Naive thymus-derived CD4-positive, alpha-beta T cell (primary cell): ENCODE measurements at regions of chr4 and their contacts with region 1.

Region 1: GRCh38 chr4:122577808-122578781 is 42.8 kb downstream of the IL21 start:
- DNase-seq: peak; percentile 12 to 95 (median 91)
- ATAC-seq: peak; percentile 90
- H3K4me3 ChIP-seq: peak overlapping the region; percentile 12
- H3K4me3 Mint-ChIP-seq: peak overlapping the region; percentile 47 to 79 (median 72)
- H3K27ac ChIP-seq: peak overlapping the region; percentile 76
- H3K27ac Mint-ChIP-seq: peak overlapping the region; percentile 82 to 98 (median 91)
- H3K4me1 ChIP-seq: peaks cover 7 to 14% of the 10 kb centered on the region in 2 donors
- H3K4me1 Mint-ChIP-seq: peaks cover 16 to 54% (median 50%) of the 10 kb centered on the region in 7 donors
- H3K27me3 ChIP-seq: no peaks in the 10 kb centered on the region
- H3K27me3 Mint-ChIP-seq: peaks cover 0 to 6% (median 0%) of the 10 kb centered on the region in 5 donors

Region 2: DNA sequence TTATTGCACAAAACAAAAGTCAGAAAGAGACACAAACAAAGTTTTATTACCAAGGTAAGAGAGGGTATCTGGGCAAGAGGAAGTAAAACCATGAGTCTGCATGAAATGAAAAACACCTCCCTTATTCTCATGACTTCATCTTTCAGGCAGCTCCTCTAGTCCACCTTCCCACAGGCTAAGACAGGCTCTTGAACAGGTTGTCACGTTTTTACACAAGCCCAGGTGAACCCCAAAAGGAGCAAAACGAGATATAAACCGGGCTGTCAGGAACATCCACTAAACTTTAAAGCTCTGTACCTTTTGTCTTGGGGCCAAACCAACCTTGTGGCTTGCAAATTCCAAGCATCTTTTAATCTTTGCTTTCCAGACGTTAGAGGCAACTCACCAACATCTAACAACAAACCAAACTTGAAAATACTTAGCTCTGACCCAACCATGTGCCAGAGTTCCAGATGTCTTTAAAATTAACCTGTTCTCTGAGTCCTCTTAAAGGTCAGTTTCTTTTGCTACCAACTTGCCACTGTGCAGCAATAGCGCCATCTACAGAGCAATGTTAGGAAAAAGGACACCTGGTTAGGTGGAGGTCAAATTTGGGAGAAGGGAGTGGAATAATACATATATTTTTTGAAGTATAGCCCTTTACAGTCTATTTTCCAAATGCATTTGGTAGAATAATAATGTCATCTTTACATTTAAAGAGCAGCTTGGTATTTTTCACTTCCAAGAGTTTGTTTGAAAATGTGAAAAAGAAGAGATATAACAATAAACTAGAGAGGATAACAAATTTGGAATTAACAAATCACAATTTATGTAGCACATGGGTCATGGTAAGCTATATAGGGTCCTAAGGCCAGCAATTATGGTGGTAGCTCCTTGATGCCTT is 1270.4 kb before region 1 on chr4:
- CTCF ChIA-PET with region 1: no interaction called
- POLR2A ChIA-PET with region 1: no interaction called
- intact Hi-C with region 1: loop called in 1 of 2 experiments (anchors 5 kb)
- DNase-seq: peak in 7 of 9 donors; percentile 10 to 52 (median 33)
- ATAC-seq: peak; percentile 70
- H3K4me3 ChIP-seq: no peak overlapping the region
- H3K4me3 Mint-ChIP-seq: no peak overlapping the region
- H3K27ac ChIP-seq: no peak overlapping the region
- H3K27ac Mint-ChIP-seq: peak overlapping the region in 1 of 9 donors; percentile 39
- H3K4me1 ChIP-seq: peaks cover 0 to 9% of the 10 kb centered on the region in 2 donors
- H3K4me1 Mint-ChIP-seq: peaks cover 3 to 19% (median 15%) of the 10 kb centered on the region in 7 donors
- H3K27me3 ChIP-seq: no peaks in the 10 kb centered on the region
- H3K27me3 Mint-ChIP-seq: peaks cover 0 to 17% (median 0%) of the 10 kb centered on the region in 5 donors

Region 3: GRCh38 chr4:121869841-121870656 is 708.0 kb before region 1 on chr4 and contains the start of gene BBS7:
- CTCF ChIA-PET with region 1: no interaction called
- POLR2A ChIA-PET with region 1: no interaction called
- intact Hi-C with region 1: loop called in 1 of 2 experiments (anchors 1 kb)
- DNase-seq: peak; percentile 79 to 93 (median 89)
- ATAC-seq: peak; percentile 98
- H3K4me3 ChIP-seq: peak within 1 kb of the TSS; percentile 99
- H3K4me3 Mint-ChIP-seq: peak within 1 kb of the TSS; percentile 88 to 98 (median 97)
- H3K27ac ChIP-seq: peak within 1 kb of the TSS; percentile 77
- H3K27ac Mint-ChIP-seq: peak within 1 kb of the TSS; percentile 69 to 95 (median 90)
- H3K4me1 ChIP-seq: peaks cover 0 to 10% of the 10 kb centered on the region in 2 donors
- H3K4me1 Mint-ChIP-seq: peaks cover 9 to 17% (median 15%) of the 10 kb centered on the region in 7 donors
- H3K27me3 ChIP-seq: no peaks in the 10 kb centered on the region
- H3K27me3 Mint-ChIP-seq: peaks cover 0 to 30% (median 12%) of the 10 kb centered on the region in 5 donors
- total RNA-seq, gene BBS7: 3.7 to 13.1 (median 8.1) TPM

Region 4: GRCh38 chr4:122131562-122132157 is 446.4 kb before region 1 on chr4:
- CTCF ChIA-PET with region 1: no interaction called
- POLR2A ChIA-PET with region 1: no interaction called
- intact Hi-C with region 1: loop called in 1 of 2 experiments (anchors 5 kb)
- DNase-seq: peak in 6 of 9 donors; percentile 37 to 64 (median 58)
- ATAC-seq: peak; percentile 69
- H3K4me3 ChIP-seq: peak overlapping the region; percentile 25
- H3K4me3 Mint-ChIP-seq: peak overlapping the region in 9 of 10 donors; percentile 15 to 60 (median 44)
- H3K27ac ChIP-seq: peak overlapping the region; percentile 46
- H3K27ac Mint-ChIP-seq: peak overlapping the region; percentile 50 to 97 (median 85)
- H3K4me1 ChIP-seq: peaks cover 10 to 14% of the 10 kb centered on the region in 2 donors
- H3K4me1 Mint-ChIP-seq: peaks cover 10 to 34% (median 24%) of the 10 kb centered on the region in 7 donors
- H3K27me3 ChIP-seq: no peaks in the 10 kb centered on the region
- H3K27me3 Mint-ChIP-seq: no peaks in the 10 kb centered on the region

Region 5: DNA sequence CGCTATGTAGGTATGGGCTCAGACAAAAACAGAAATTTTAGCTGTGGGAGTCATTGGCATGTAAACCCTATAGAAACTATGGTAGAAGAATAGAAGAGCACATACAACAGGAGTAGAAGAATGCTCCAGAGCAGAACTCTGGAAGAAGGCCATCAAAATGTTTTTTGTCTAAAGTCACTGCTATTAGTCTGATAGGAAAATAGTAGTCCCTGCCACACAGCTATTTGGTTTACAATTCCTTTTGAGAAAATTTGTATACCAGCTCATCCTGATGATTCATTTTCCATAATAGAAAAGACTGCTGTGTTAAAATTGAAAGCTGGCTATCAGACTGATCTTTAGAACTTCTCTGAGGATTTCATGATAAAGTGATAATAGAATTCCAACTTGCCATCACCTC is 232.1 kb before region 1 on chr4:
- CTCF ChIA-PET with region 1: no interaction called
- POLR2A ChIA-PET with region 1: no interaction called
- intact Hi-C with region 1: loop called in 1 of 2 experiments (anchors 5 kb)
- DNase-seq: no peak
- ATAC-seq: no peak
- H3K4me3 ChIP-seq: no peak overlapping the region
- H3K4me3 Mint-ChIP-seq: no peak overlapping the region
- H3K27ac ChIP-seq: no peak overlapping the region
- H3K27ac Mint-ChIP-seq: no peak overlapping the region
- H3K4me1 ChIP-seq: no peaks in the 10 kb centered on the region
- H3K4me1 Mint-ChIP-seq: no peaks in the 10 kb centered on the region
- H3K27me3 ChIP-seq: no peaks in the 10 kb centered on the region
- H3K27me3 Mint-ChIP-seq: no peaks in the 10 kb centered on the region

Region 6: DNA sequence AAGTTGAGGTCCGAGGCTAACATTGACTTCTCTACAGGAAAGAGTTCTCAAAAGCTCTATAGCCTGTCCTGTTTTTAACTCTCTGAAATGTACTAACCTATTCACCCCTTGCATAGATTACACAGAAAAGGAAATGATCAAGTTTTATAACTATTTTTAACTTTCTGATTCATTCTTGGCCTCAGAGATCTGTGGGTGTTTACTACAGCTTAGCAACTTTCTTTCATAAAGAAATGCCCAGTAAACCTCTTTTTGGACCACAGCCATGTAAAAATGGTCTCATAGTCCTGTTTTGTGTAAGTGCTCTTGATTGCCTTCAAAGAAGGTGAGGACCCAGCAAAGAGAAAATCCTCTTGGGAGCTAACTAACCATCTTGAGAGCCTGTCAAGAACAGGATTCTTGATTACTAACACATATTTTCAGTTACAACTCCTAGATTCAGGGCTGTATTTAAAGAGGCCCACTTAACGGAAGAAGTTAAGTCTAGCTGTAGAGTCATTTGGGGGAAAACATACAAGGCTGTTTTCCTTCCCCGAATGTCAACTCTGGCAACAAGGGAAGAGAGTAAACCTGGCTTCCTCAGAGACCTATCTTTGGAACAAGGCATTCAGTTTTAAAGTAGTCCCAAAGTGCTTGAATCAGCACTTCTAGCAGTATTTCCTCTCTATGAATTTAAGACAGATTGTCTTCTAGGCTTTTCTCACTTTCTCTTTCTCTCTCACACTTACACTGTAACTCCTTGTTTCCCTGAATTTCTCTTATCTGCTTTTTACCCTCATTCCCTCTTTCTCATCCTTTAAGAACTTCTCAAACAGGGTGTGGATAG is 35.5 kb before region 1 on chr4:
- CTCF ChIA-PET with region 1: interaction called, 3 read pairs
- POLR2A ChIA-PET with region 1: no interaction called
- intact Hi-C with region 1: loop called in 1 of 2 experiments (anchors 1 kb)
- DNase-seq: no peak
- ATAC-seq: no peak
- H3K4me3 ChIP-seq: no peak overlapping the region
- H3K4me3 Mint-ChIP-seq: peak overlapping the region in 1 of 10 donors; percentile 67
- H3K27ac ChIP-seq: no peak overlapping the region
- H3K27ac Mint-ChIP-seq: peak overlapping the region in 5 of 9 donors; percentile 4 to 92 (median 64)
- H3K4me1 ChIP-seq: peaks cover 8 to 35% of the 10 kb centered on the region in 2 donors
- H3K4me1 Mint-ChIP-seq: peaks cover 0 to 64% (median 16%) of the 10 kb centered on the region in 7 donors
- H3K27me3 ChIP-seq: no peaks in the 10 kb centered on the region
- H3K27me3 Mint-ChIP-seq: no peaks in the 10 kb centered on the region

Region 7: GRCh38 chr4:122777846-122778655 is 200.0 kb after region 1 on chr4:
- CTCF ChIA-PET with region 1: no interaction called
- POLR2A ChIA-PET with region 1: no interaction called
- intact Hi-C with region 1: no loop called
- DNase-seq: no peak
- ATAC-seq: no peak
- H3K4me3 ChIP-seq: no peak overlapping the region
- H3K4me3 Mint-ChIP-seq: no peak overlapping the region
- H3K27ac ChIP-seq: no peak overlapping the region
- H3K27ac Mint-ChIP-seq: no peak overlapping the region
- H3K4me1 ChIP-seq: no peaks in the 10 kb centered on the region
- H3K4me1 Mint-ChIP-seq: peaks cover 0 to 1% (median 0%) of the 10 kb centered on the region in 7 donors
- H3K27me3 ChIP-seq: no peaks in the 10 kb centered on the region
- H3K27me3 Mint-ChIP-seq: peaks cover 0 to 13% (median 6%) of the 10 kb centered on the region in 5 donors

Region 8: GRCh38 chr4:122922877-122923511 is 344.9 kb after region 1 on chr4:
- CTCF ChIA-PET with region 1: no interaction called
- POLR2A ChIA-PET with region 1: no interaction called
- intact Hi-C with region 1: loop called (anchors 2 kb)
- DNase-seq: peak; percentile 60 to 87 (median 82)
- ATAC-seq: peak; percentile 98
- H3K4me3 ChIP-seq: peak overlapping the region; percentile 97
- H3K4me3 Mint-ChIP-seq: peak overlapping the region in 6 of 10 donors; percentile 98 to 100 (median 98)
- H3K27ac ChIP-seq: peak overlapping the region; percentile 68
- H3K27ac Mint-ChIP-seq: peak overlapping the region in 8 of 9 donors; percentile 92 to 98 (median 96)
- H3K4me1 ChIP-seq: peaks cover 11 to 12% of the 10 kb centered on the region in 2 donors
- H3K4me1 Mint-ChIP-seq: peaks cover 0 to 33% (median 7%) of the 10 kb centered on the region in 7 donors
- H3K27me3 ChIP-seq: no peaks in the 10 kb centered on the region
- H3K27me3 Mint-ChIP-seq: no peaks in the 10 kb centered on the region